ENCODE measurements at regions of chr3 and their contacts with region 1.

Region 1: GRCh38 chr3:197674741-197675562 is 61.8 kb downstream of the RUBCN start:
- DNase-seq: no peak
- H3K4me3 ChIP-seq: no peak overlapping the region
- H3K27ac ChIP-seq: no peak overlapping the region
- H3K4me1 ChIP-seq: peaks cover 0 to 7% (median 0%) of the 10 kb centered on the region in 4 donors
- H3K27me3 ChIP-seq: no peaks in the 10 kb centered on the region
- CTCF ChIP-seq: no peak
- EP300 ChIP-seq: no peak
- POLR2A ChIP-seq: no peak

Region 2: DNA sequence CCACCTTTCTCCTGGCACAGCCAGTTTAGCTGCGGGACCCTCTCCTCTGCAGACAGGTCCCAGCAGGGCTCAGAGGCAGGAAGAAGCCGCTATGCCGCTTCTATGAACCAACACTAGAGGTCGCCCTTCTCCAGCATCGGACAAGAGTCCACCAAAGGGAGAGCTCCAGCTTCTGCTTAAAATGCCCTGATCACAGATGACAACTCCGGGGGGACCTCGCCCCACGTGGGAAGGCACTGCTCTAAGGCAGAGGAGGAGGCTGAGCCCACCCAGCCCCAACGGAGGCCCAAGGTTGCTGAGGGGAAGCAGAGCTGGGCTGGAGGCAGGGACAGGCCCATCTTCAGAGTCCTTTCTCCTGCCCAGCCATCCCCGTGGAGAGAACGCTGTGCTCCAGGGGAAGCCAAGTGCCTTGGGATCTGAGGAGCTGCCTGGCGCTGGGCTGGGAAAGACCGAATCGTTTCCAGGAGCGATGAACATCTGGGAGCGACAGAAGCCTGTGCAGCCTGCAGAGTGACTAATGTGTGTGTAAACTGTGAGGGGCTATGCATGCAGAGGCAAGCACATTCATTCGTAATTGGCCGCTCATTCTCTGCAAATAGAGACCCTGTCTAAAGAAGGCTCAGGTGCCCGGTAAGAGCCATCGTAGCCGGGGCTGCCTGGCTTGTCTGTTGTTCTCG is 75.7 kb before region 1 on chr3:
- intact Hi-C with region 1: loop called (anchors 5 kb)
- DNase-seq: no peak
- H3K4me3 ChIP-seq: peak overlapping the region in 2 of 4 donors; percentile 2 to 12
- H3K27ac ChIP-seq: peak overlapping the region in 1 of 4 donors; percentile 46
- H3K4me1 ChIP-seq: peaks cover 4 to 18% (median 12%) of the 10 kb centered on the region in 4 donors
- H3K27me3 ChIP-seq: no peaks in the 10 kb centered on the region
- CTCF ChIP-seq: peak; percentile 77 to 92 (median 84)
- EP300 ChIP-seq: no peak
- POLR2A ChIP-seq: no peak